Activated CD8-positive, alpha-beta T cell treated with anti-CD3 and anti-CD28 coated beads, Interleukin-2, amount 10 ng/mL, durations not matched to agents 7 days and 5 days (primary cell): ENCODE measurements at regions of chr15 and their contacts with region 1.

Region 1: DNA sequence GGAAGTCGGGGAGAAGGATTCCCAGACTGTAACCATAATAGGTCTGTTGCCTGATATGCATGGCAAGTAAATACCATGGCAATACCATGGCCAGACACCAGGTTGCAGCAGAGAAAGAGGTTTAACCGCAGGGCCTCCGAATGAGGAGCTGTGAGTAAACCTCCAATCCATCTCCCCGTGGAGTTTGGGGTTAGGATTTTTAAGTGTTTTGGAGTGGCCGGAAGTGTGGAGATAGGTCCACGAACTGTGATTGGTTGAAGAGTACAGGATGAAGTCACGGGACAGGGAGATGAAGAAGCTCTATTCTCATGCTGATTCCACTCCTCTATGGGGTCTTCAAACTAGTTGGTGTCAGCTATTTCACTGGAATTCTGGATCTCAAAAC is 127.9 kb downstream of the ST8SIA2 start:
- DNase-seq: peak; percentile 67
- ATAC-seq: peak; percentile 64
- H3K4me3 Mint-ChIP-seq: no peak overlapping the region
- H3K27ac Mint-ChIP-seq: no peak overlapping the region
- H3K4me1 Mint-ChIP-seq: peaks cover 3% of the 10 kb centered on the region
- H3K27me3 Mint-ChIP-seq: no peaks in the 10 kb centered on the region

Region 2: DNA sequence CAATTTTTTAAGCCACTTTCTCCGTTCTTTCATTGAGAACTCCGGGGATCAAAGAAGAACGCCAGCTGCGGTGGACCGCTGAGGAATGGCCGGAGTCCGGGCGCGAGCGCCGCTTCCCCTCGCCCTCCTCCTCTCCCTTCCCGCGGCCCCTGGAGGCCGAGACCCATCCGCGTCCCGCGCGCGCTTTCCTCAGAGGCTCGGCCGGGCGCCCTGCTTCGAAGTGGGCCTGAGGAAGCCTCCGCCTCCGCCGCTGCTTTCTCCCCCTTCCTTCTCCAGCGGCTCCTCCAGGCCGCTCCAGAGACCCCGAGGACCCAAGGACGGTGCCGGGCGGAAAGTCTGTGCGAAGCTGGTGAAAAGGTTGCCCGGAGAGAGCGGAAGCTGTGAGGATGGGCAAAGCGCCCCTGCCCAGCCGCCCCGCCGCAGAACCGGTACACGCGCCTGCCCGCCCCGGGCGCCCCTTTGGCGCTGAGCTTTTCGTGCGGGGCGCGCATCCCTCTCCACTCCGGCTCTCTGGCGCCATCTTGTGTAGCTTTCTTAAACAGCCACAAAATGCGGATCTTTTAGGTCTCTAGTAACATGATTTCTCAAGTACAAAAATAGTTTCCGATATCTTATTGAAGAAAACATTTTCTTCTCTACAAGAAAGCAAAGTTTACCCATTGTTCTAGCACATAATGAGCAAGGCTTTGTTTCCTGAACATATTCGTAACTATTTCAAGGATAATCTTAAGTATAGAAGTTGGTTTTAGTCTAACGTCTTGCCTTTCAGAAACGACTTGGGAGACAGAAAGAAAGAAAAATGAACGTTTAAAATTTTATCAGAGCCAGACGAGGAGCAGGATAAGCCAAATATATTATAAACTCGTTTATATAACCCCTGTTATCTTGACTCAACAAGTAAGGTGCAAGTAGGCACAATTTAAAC is 193.1 kb after region 1 on chr15:
- CTCF ChIA-PET with region 1: interaction called, 30 read pairs
- POLR2A ChIA-PET with region 1: no interaction called
- DNase-seq: peak; percentile 83
- ATAC-seq: peak; percentile 94
- H3K4me3 Mint-ChIP-seq: peak overlapping the region; percentile 63
- H3K27ac Mint-ChIP-seq: no peak overlapping the region
- H3K4me1 Mint-ChIP-seq: peaks cover 5% of the 10 kb centered on the region
- H3K27me3 Mint-ChIP-seq: peaks cover 15% of the 10 kb centered on the region